ENCODE measurements at regions of chr4 and their contacts with region 1.

Region 1: DNA sequence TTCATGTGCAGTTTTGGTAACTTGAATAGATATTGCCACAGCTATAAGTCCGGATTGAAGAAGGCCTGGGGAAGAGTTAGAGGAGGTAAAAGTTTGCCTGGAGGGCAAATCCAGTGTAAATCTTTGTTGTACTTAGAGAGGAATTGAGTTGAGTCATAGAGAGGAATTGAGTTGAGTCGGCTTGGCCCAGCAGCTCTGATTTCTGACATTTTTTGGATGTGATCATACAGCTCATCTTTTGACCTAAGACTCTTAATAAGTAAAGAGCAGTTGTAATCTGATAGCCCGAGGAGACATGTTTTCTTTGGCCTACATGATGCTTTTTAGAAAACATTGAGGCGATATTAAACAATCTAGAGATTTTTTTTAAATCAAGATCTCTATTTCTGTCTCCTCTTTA is 3.9 kb downstream of the KIT start:
- DNase-seq: no peak
- ATAC-seq: no peak
- H3K4me3 ChIP-seq: no peak overlapping the region
- H3K27ac ChIP-seq: no peak overlapping the region
- H3K4me1 ChIP-seq: peaks cover 0 to 16% of the 10 kb centered on the region in 2 experiments; a peak in 2 of 4 replicates
- H3K27me3 ChIP-seq: peaks cover 11% of the 10 kb centered on the region; the same call in 1 of the 2 replicates
- CTCF ChIP-seq: no peak
- POLR2A ChIP-seq: no peak
- RAD21 ChIP-seq: no peak

Region 2: GRCh38 chr4:54700986-54701385 is 39.3 kb after region 1 on chr4:
- CTCF ChIA-PET with region 1: no interaction called
- POLR2A ChIA-PET with region 1: no interaction called
- RAD21 ChIA-PET with region 1: no interaction called
- intact Hi-C with region 1: loop called (anchors 1 kb)
- DNase-seq: no peak
- ATAC-seq: no peak
- H3K4me3 ChIP-seq: no peak overlapping the region
- H3K27ac ChIP-seq: no peak overlapping the region
- H3K4me1 ChIP-seq: no peaks in the 10 kb centered on the region
- H3K27me3 ChIP-seq: peaks cover 10% of the 10 kb centered on the region; the same call in 1 of the 2 replicates
- CTCF ChIP-seq: no peak
- POLR2A ChIP-seq: no peak
- RAD21 ChIP-seq: no peak

Measured in HCT116 (cell line).